AG04450 (cell line): ENCODE measurements at regions of chr1 and their contacts with region 1.

Region 1: GRCh38 chr1:62906428-62906886 is 122.5 kb downstream of the ATG4C start:
- DNase-seq: no peak
- H3K4me3 ChIP-seq: no peak overlapping the region
- H3K27ac ChIP-seq: no peak overlapping the region
- H3K27me3 ChIP-seq: no peaks in the 10 kb centered on the region
- CTCF ChIP-seq: peak; percentile 55

Region 2: DNA sequence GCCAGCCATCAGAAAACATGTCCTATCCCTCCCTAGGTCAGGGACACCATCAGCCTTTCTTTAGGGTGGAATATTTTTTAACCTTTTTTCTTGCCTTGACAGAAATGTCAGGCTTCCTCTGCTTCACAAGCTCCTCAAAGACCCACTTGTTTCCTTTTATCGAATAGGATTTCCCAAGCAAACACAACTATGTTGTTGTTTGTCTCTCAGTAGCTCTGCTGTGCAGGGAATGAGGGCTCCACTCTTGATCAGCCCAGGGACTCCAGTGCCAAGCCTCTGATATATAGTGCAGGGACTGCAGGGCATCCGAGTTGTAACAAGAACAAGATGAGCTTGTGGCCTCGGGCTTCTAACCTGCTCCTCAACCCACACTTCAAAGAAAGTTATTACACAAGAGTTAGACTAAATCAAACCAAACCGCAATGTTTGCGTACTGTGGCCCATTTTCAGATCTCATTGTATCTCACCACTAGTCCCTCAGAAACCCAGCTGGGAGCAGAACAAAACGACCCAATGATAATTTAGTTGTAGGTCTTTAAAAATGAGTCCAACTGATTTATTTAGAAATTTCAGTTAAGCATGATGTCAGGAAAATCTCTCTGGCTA is 14.4 kb before region 1 on chr1:
- CTCF ChIA-PET with region 1: interaction called, 15 read pairs
- POLR2A ChIA-PET with region 1: no interaction called
- DNase-seq: no peak
- H3K4me3 ChIP-seq: no peak overlapping the region
- H3K27ac ChIP-seq: no peak overlapping the region
- H3K27me3 ChIP-seq: peaks cover 3% of the 10 kb centered on the region
- CTCF ChIP-seq: no peak